ENCODE measurements at regions of chr19 and their contacts with region 1.

Region 1: DNA sequence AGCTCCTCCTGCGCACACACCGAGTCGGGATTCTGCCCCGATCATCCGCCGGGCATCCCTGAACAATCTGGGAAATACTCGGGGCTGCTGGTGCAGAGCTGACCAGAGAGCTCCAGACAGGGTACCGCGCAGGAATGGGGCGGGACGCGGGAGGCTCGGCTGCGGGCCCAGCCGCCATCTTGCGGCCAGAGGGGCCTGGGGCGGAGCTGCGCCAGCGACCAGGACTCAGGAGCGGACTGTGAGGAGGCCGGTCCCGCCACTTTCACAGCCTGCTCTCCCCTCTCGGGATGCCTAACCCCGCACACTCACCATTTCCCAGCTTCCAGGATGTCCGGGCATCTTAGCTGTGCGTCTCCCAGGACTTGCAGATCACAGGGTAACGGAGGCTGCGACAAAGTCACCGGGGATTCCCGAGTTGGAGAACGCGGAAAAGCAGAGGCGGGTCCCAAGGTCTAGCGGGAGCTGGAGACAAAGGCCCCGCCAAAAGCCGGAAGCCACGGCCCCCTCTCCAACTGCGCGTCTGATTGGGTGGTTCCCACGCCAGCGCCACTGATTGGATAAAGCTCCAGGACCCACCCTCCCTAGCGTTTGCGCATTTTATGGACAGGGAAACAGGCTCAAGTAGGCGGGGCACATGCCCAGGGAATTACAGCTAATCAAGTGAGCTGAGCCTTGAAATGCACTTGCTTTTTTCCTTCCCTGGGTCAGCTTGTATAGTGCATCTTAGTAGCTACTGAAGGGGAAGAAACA is 15.8 kb upstream of the ZNF43 start:
- DNase-seq: peak; percentile 77 to 92 (median 82)
- ATAC-seq: peak; percentile 99
- H3K4me3 ChIP-seq: peak overlapping the region; percentile 64
- H3K27ac ChIP-seq: peak overlapping the region; percentile 76
- H3K4me1 ChIP-seq: peaks cover 2 to 5% of the 10 kb centered on the region in 2 experiments; a peak in 1 of 5 replicates
- H3K27me3 ChIP-seq: no peaks in the 10 kb centered on the region
- CTCF ChIP-seq: no peak
- EP300 ChIP-seq: no peak
- POLR2A ChIP-seq: peak; percentile 71
- RAD21 ChIP-seq: no peak

Region 2: GRCh38 chr19:21835810-21836444 is 15.8 kb before region 1 on chr19 and contains the start of gene ZNF43:
- CTCF ChIA-PET with region 1: no interaction called
- POLR2A ChIA-PET with region 1: interaction called, 10 read pairs
- in situ Hi-C with region 1: no loop called
- intact Hi-C with region 1: no loop called
- DNase-seq: peak; percentile 72 to 89 (median 80)
- ATAC-seq: peak; percentile 95
- H3K4me3 ChIP-seq: peak within 1 kb of the TSS; percentile 79
- H3K27ac ChIP-seq: peak within 1 kb of the TSS; percentile 93
- H3K4me1 ChIP-seq: peaks cover 2 to 4% of the 10 kb centered on the region in 2 experiments; a peak in 2 of 5 replicates
- H3K27me3 ChIP-seq: no peaks in the 10 kb centered on the region
- CTCF ChIP-seq: no peak
- EP300 ChIP-seq: no peak
- POLR2A ChIP-seq: peak; percentile 89
- RAD21 ChIP-seq: no peak
- polyA plus RNA-seq, gene ZNF43: 3.6 to 5.7 TPM